ENCODE measurements at regions of chr2 and their contacts with region 1.

Region 1: GRCh38 chr2:224585205-224586088 is at the start of gene CUL3:
- DNase-seq: peak; percentile 100
- H3K4me3 Mint-ChIP-seq: peak within 1 kb of the TSS; percentile 96
- H3K27ac Mint-ChIP-seq: peak within 1 kb of the TSS; percentile 93
- H3K4me1 Mint-ChIP-seq: peaks cover 45% of the 10 kb centered on the region
- H3K27me3 Mint-ChIP-seq: no peaks in the 10 kb centered on the region
- total RNA-seq, gene CUL3: 66.9 to 72.7 TPM

Region 2: DNA sequence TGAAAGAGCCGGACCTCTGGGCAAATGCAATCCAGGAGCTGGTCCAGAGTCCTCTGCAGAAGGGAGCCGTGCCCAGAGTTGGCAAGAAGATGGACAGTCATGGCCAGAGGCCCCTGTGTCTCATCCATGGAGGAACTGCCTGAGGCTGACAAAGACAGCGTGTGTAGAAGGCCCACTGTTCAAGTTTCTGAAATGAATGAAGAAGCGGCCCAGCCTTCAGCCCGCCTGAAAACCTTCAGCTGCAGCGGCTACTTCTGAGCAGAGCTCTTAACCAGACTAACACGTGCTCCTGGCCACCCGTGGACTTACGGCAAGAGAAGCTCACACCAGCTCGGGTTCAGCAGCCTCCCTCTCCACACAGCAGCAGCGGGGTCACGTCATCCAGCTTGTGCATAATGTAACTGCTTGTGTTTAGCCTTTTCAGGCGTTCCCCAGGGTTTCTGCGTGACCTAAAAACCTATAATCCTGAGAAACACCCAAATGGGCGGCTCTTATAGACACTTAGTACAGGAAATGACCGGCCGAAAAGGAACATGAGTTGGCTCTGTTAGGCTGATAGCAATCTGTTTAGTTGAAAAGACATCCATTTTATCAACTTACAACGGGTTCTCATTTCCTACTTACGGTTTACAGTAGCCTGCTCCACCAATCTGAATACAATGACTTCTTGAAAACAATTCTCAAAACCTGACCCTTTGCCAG is 183.7 kb before region 1 on chr2 and contains the start of gene FAM124B:
- CTCF ChIA-PET with region 1: interaction called, 6 read pairs
- POLR2A ChIA-PET with region 1: interaction called, 15 read pairs
- DNase-seq: peak; percentile 56
- H3K4me3 Mint-ChIP-seq: peak within 1 kb of the TSS; percentile 65
- H3K27ac Mint-ChIP-seq: peak within 1 kb of the TSS; percentile 81
- H3K4me1 Mint-ChIP-seq: peaks cover 14% of the 10 kb centered on the region
- H3K27me3 Mint-ChIP-seq: no peaks in the 10 kb centered on the region
- total RNA-seq, gene FAM124B: 1.2 to 2.1 TPM

Region 3: GRCh38 chr2:224520064-224520463 is 65.4 kb before region 1 on chr2:
- CTCF ChIA-PET with region 1: interaction called, 7 read pairs
- POLR2A ChIA-PET with region 1: interaction called, 14 read pairs
- DNase-seq: peak; percentile 36
- H3K4me3 Mint-ChIP-seq: no peak overlapping the region
- H3K27ac Mint-ChIP-seq: peak overlapping the region; percentile 29
- H3K4me1 Mint-ChIP-seq: peaks cover 45% of the 10 kb centered on the region
- H3K27me3 Mint-ChIP-seq: no peaks in the 10 kb centered on the region

Region 4: DNA sequence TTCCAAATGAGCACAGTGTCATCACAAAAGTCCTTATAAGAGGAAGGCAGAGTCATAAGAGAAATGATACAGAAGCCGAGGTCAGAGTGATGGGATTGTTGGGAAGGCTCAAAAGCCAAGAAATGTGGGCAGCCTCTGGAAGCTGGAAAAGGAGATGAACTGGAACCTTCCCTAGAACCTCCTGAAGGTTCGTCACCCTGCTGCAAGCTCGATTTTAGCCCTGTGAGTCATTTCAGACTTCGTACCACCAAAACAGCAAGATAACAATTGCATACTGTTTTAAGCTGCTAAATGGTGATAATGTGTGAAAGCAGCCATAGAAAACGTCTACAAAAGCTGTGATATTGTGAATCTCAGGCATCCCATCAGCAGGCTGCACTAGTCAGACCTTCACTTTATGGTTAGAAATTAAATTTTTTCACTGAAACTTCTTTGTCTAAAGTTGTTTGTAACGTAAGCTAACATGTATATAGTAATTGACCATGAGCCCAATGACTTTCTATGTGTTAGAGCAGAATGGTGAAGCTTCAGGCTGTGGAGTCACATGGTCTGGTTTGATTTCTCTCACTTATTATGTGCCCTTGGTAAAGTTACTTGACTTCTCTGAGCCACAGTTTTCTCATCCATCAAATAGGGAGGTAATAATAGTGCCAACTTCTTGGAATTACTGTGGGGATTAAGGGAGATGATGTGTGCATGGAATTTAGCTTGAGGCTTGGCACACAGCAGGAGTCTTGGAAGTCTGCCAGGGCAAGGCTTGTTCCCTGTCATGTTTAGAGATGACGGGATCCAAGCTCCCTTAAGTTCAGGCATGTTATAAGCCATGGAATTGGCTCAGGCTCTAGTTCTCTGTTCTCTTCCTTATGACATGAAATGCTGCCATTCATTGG is 262.8 kb after region 1 on chr2:
- CTCF ChIA-PET with region 1: no interaction called
- POLR2A ChIA-PET with region 1: no interaction called
- DNase-seq: no peak
- H3K4me3 Mint-ChIP-seq: no peak overlapping the region
- H3K27ac Mint-ChIP-seq: peak overlapping the region; percentile 0
- H3K4me1 Mint-ChIP-seq: peaks cover 4% of the 10 kb centered on the region
- H3K27me3 Mint-ChIP-seq: no peaks in the 10 kb centered on the region